ENCODE measurements at regions of chr12 and their contacts with region 1.

Region 1: DNA sequence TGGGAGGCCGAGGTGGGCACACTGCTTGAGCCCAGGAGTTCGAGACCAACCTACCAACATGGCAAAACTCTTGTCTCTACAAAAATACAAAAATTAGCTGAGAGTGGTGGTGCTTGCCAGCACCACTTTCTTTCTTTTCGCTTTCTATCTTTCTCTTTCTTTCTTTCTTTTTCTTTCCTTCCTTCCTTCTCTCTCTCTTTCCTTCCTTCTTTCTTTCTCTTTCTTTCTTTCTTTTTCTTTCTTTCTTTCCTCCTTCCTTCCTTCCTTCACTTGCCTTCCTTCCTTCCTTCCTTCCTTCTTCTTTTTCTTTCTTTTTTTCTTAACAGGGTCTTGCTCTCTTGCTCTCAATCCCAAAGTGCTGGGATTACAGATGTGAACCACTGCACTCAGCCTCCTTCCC is 66.8 kb downstream of the HSD17B6 start:
- DNase-seq: no peak
- ATAC-seq: no peak
- H3K4me3 ChIP-seq: no peak overlapping the region
- H3K27ac ChIP-seq: no peak overlapping the region
- H3K4me1 ChIP-seq: no peaks in the 10 kb centered on the region
- H3K27me3 ChIP-seq: no peaks in the 10 kb centered on the region
- CTCF ChIP-seq: no peak
- EP300 ChIP-seq: no peak
- POLR2A ChIP-seq: no peak
- RAD21 ChIP-seq: no peak

Region 2: DNA sequence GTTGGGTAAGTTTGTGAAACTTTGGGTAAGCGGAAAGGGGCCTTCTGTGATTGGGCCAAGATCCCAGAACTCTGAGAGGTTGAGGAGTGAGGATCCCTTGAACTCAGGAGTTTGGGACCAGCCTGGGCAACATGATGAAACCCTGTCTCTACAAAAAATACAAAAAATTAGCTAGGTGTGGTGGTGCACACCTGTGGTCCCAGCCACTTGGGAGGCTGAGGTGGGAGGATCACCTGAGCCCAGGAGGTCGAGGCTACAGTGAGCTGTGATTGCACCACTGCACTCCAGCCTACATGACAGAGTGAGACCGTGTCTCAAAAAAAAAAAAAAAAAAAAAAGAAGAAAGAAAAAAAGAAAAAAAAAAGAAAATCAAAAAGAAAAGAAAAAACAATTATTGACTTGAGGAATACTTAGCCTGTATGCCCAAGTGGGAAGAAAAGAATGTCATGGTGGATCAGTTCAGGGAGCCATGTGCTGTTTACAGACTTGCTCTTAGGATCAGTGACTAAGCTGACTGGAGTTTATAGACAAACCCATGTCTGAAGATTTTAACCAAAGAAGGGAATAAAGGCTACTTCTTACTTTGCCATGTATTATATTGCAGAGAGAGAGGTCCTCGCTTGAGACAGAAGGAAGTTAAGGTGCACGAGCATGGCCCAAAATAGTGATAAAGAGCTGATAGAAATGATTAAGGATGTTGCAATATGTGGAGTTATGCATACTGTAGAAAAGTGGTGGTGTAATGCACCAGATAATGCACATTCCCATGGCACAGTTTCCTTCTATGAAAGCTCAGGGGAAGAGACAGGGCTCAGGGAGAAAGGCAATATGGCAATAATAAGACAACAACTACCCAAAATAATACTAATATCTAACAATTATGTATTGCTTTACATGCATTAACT is 65.9 kb before region 1 on chr12:
- CTCF ChIA-PET with region 1: no interaction called
- POLR2A ChIA-PET with region 1: no interaction called
- in situ Hi-C with region 1: no loop called
- intact Hi-C with region 1: loop called (anchors 5 kb)
- DNase-seq: no peak
- ATAC-seq: no peak
- H3K4me3 ChIP-seq: no peak overlapping the region
- H3K27ac ChIP-seq: no peak overlapping the region
- H3K4me1 ChIP-seq: no peaks in the 10 kb centered on the region
- H3K27me3 ChIP-seq: no peaks in the 10 kb centered on the region
- CTCF ChIP-seq: no peak
- EP300 ChIP-seq: no peak
- POLR2A ChIP-seq: no peak
- RAD21 ChIP-seq: no peak

Region 3: DNA sequence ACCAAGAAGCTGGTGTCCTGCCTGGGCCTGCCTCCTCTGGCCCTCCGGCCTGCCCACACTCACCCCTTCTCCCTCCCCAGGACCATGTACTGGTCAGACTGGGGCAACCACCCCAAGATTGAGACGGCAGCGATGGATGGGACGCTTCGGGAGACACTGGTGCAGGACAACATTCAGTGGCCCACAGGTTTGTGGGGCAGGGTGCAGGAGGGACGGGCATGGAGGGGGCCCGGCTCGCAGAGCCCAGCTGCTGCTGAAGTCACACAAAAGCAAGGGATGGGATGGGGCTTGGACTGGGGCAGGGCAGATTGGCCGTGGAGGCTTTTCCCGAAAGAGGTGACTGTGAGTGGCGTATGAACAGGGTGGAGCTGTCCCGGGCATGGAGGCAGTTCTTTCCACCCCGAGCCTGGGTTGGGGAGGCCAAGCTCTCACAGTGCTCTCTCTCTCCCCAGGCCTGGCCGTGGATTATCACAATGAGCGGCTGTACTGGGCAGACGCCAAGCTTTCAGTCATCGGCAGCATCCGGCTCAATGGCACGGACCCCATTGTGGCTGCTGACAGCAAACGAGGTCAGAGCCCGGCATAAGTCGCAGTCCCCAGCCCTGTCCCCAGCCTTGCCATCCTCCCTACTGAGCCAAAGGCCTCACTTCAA is 378.8 kb after region 1 on chr12:
- CTCF ChIA-PET with region 1: no interaction called
- POLR2A ChIA-PET with region 1: no interaction called
- in situ Hi-C with region 1: no loop called
- intact Hi-C with region 1: no loop called
- DNase-seq: no peak
- ATAC-seq: no peak; the same call in 2 of the 3 replicates
- H3K4me3 ChIP-seq: no peak overlapping the region
- H3K27ac ChIP-seq: no peak overlapping the region
- H3K4me1 ChIP-seq: peaks cover 4 to 45% of the 10 kb centered on the region in 2 experiments; a peak in 3 of 5 replicates
- H3K27me3 ChIP-seq: peaks cover 28 to 77% of the 10 kb centered on the region in 2 experiments; a peak in 4 of 5 replicates
- CTCF ChIP-seq: no peak
- EP300 ChIP-seq: no peak
- POLR2A ChIP-seq: no peak
- RAD21 ChIP-seq: no peak